ENCODE measurements at regions of chr5 and their contacts with region 1.

Region 1: GRCh38 chr5:18497089-18497488 is 862.8 kb downstream of the TAF11L14 start:
- DNase-seq: no peak
- H3K4me3 ChIP-seq: no peak overlapping the region
- H3K27ac ChIP-seq: no peak overlapping the region
- H3K4me1 ChIP-seq: no peaks in the 10 kb centered on the region
- H3K27me3 ChIP-seq: no peaks in the 10 kb centered on the region
- CTCF ChIP-seq: no peak
- EP300 ChIP-seq: no peak
- POLR2A ChIP-seq: no peak

Region 2: GRCh38 chr5:16726538-16726946 is 1770.5 kb before region 1 on chr5:
- in situ Hi-C with region 1: no loop called
- intact Hi-C with region 1: no loop called
- DNase-seq: no peak
- H3K4me3 ChIP-seq: no peak overlapping the region
- H3K27ac ChIP-seq: peak overlapping the region in 3 of 4 donors; percentile 10 to 66 (median 59)
- H3K4me1 ChIP-seq: peaks cover 0 to 29% (median 17%) of the 10 kb centered on the region in 4 donors
- H3K27me3 ChIP-seq: no peaks in the 10 kb centered on the region
- CTCF ChIP-seq: no peak
- EP300 ChIP-seq: no peak
- POLR2A ChIP-seq: no peak

Region 3: DNA sequence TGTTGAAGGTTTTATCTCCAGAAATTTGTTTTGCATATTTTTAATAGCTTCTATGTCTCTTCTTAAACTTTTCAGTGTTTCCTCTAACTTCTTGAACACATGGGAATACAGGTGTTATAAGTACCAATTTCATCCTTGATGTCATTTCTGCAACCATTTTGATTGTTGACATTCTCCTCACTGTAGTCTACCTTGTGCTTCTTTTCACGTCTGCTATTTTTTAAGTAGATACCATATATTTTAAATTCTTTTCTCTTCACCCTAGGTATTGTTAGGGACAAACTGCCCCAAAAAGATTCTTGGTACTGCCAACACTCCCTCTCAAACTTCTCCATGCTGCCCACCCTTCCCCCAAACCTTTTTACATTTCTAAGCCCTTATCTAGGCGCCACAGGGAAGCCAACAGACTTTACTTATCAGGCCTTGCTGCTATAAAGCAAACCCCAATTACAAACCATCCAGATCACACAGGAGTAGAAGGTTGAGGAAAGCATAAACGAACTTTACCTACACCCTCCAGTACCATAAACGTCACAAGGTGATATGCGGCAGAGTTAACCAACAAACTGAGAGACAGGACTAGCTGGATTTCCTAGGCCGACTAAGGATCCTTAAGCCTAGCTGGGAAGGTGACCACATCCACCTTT is 302.5 kb after region 1 on chr5:
- in situ Hi-C with region 1: no loop called
- intact Hi-C with region 1: loop called (anchors 5 kb)
- DNase-seq: no peak
- H3K4me3 ChIP-seq: no peak overlapping the region
- H3K27ac ChIP-seq: no peak overlapping the region
- H3K4me1 ChIP-seq: no peaks in the 10 kb centered on the region
- H3K27me3 ChIP-seq: no peaks in the 10 kb centered on the region
- CTCF ChIP-seq: no peak
- EP300 ChIP-seq: no peak
- POLR2A ChIP-seq: no peak